PC-3 (cell line): ENCODE measurements at regions of chr7 and their contacts with region 1.

Region 1: GRCh38 chr7:125485223-125485622 is 555.6 kb upstream of the POT1 start:
- DNase-seq: peak; percentile 51
- ATAC-seq: peak; percentile 55
- H3K4me3 ChIP-seq: no peak overlapping the region
- H3K27ac ChIP-seq: peak overlapping the region; percentile 85
- H3K4me1 ChIP-seq: peaks cover 18% of the 10 kb centered on the region; the same call in 1 of the 2 replicates
- H3K27me3 ChIP-seq: no peaks in the 10 kb centered on the region
- CTCF ChIP-seq: no peak

Region 2: GRCh38 chr7:125436220-125436619 is 49.0 kb before region 1 on chr7:
- CTCF ChIA-PET with region 1: no interaction called
- POLR2A ChIA-PET with region 1: no interaction called
- intact Hi-C with region 1: loop called (anchors 5 kb)
- DNase-seq: peak; percentile 63
- ATAC-seq: peak; percentile 97
- H3K4me3 ChIP-seq: no peak overlapping the region
- H3K27ac ChIP-seq: peak overlapping the region; percentile 44
- H3K4me1 ChIP-seq: peaks cover 7% of the 10 kb centered on the region; the same call in 1 of the 2 replicates
- H3K27me3 ChIP-seq: no peaks in the 10 kb centered on the region
- CTCF ChIP-seq: no peak

Region 3: DNA sequence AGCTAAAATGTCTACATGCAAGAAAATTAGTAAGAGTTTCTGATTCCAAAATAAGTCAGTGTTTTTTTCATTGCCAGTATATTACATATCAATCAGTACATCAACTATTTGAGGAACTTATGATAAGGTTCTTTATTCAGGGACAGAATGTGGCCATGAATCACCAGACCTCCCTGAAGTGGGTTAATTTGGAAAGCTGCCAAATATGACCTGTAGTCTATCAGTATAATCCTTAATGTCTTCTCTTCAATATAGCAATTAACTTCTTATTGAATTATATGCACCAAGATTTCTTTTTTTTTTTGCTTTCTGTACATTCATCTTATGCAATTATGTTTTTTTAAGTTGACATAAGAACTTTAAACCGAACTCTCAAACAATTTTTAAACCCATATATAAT is 158.9 kb after region 1 on chr7:
- CTCF ChIA-PET with region 1: no interaction called
- POLR2A ChIA-PET with region 1: no interaction called
- intact Hi-C with region 1: no loop called
- DNase-seq: no peak
- ATAC-seq: no peak
- H3K4me3 ChIP-seq: no peak overlapping the region
- H3K27ac ChIP-seq: no peak overlapping the region
- H3K4me1 ChIP-seq: no peaks in the 10 kb centered on the region
- H3K27me3 ChIP-seq: no peaks in the 10 kb centered on the region
- CTCF ChIP-seq: no peak

Region 4: DNA sequence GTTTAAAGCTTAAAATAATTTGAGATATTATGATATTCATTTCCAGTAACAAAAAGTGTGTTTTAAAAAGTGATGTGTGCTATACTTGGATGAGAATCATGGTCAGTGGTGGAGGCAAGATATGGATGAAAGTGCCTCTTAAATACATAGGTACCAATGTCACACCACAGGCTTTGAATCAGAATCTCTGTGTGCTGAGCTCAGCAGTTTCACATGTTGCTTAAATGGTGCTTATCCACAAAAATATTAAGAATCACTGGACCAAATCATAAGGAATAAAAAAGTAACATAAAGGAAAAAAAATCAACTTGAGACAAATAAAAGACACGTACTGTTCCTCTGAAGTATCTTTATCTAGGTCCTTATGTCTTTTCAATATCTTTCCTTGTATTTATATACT is 294.9 kb after region 1 on chr7:
- CTCF ChIA-PET with region 1: no interaction called
- POLR2A ChIA-PET with region 1: no interaction called
- intact Hi-C with region 1: no loop called
- DNase-seq: no peak
- ATAC-seq: no peak
- H3K4me3 ChIP-seq: no peak overlapping the region
- H3K27ac ChIP-seq: no peak overlapping the region
- H3K4me1 ChIP-seq: no peaks in the 10 kb centered on the region
- H3K27me3 ChIP-seq: no peaks in the 10 kb centered on the region
- CTCF ChIP-seq: no peak

Region 5: DNA sequence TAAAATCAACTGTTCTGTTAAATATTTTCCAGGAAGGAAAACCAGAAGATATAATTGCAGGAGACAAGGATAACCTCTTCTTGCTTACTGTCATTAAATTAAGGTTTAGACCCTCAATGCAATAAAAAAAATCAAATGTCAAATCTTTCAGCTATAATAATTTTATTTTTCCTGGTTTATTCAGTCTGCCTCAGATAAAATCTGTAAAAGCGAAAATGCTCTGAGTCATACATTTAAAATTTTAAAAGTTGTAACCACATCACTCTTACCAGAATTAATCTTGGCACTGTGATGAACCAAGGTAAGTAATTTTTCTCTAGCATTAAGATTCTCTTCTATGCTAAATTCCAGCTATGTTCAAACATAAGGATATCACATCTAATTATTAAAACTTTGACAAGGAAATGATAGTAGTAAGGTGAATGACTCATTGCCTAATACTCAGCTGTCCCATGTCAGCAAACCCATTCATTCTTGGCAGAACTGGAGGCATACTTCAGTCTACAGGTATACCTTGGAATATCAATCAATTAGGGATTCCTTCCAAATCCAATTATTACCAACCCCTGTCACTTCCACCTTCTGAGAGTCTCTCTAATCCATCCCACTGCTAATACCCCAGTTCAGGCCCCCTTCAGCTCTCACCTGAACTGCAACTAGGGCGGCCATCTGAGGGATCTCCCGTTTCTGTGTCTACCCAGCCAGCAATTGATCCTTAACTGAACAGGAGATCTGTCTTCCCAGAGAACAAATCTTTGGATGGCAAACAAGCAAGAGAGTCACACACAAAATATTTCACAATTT is 1333.4 kb after region 1 on chr7:
- CTCF ChIA-PET with region 1: no interaction called
- POLR2A ChIA-PET with region 1: no interaction called
- intact Hi-C with region 1: no loop called
- DNase-seq: no peak
- ATAC-seq: no peak
- H3K4me3 ChIP-seq: no peak overlapping the region
- H3K27ac ChIP-seq: no peak overlapping the region
- H3K4me1 ChIP-seq: no peaks in the 10 kb centered on the region
- H3K27me3 ChIP-seq: no peaks in the 10 kb centered on the region
- CTCF ChIP-seq: no peak